ENCODE measurements at regions of chr19 and their contacts with region 1.

Region 1: GRCh38 chr19:44113138-44113783 is at the start of gene ZNF225:
- DNase-seq: peak; percentile 96 to 99 (median 98)
- H3K4me3 ChIP-seq: peak within 1 kb of the TSS; percentile 59 to 98 (median 82)
- H3K27ac ChIP-seq: peak within 1 kb of the TSS in 50 of 59 donors; percentile 9 to 90 (median 70)
- H3K27me3 ChIP-seq: no peaks in the 10 kb centered on the region
- CTCF ChIP-seq: peak in 40 of 56 donors; percentile 3 to 56 (median 36)
- total RNA-seq, gene ZNF225: 4.5 to 14.2 (median 8.2) TPM

Region 2: GRCh38 chr19:44051654-44052402 is 61.4 kb before region 1 on chr19 and contains the start of gene ZNF223:
- intact Hi-C with region 1: loop called (anchors 1 kb)
- DNase-seq: peak; percentile 90 to 98 (median 96)
- H3K4me3 ChIP-seq: peak within 1 kb of the TSS; percentile 59 to 95 (median 83)
- H3K27ac ChIP-seq: peak within 1 kb of the TSS in 51 of 59 donors; percentile 7 to 88 (median 71)
- H3K27me3 ChIP-seq: peaks cover 0 to 17% (median 0%) of the 10 kb centered on the region in 45 donors
- CTCF ChIP-seq: peak in 21 of 56 donors; percentile 7 to 45 (median 28)
- total RNA-seq, gene ZNF223: 5.2 to 18.6 (median 10.3) TPM

Region 3: DNA sequence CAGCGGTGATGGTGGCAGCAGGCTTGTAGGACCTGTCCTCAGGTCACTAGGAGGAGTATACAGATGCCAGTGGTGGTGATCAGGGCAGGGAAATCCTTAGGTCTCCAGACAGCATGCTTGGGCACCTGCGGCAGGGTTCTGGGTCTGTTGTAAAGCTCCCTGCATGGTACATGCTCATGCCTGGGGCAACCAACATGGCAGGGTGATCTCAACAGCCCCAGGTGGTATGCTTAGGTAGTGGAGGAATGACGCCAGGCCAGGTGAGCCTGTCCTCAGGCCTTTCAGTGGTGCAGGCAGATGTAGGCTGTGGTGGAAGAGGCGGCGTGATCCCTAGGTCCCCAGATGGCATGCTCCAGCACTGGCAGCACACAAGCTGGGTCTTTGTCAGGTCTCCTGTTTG is 29.4 kb before region 1 on chr19:
- intact Hi-C with region 1: no loop called
- DNase-seq: no peak
- H3K4me3 ChIP-seq: no peak overlapping the region
- H3K27ac ChIP-seq: no peak overlapping the region
- H3K27me3 ChIP-seq: no peaks in the 10 kb centered on the region
- CTCF ChIP-seq: no peak

Region 4: DNA sequence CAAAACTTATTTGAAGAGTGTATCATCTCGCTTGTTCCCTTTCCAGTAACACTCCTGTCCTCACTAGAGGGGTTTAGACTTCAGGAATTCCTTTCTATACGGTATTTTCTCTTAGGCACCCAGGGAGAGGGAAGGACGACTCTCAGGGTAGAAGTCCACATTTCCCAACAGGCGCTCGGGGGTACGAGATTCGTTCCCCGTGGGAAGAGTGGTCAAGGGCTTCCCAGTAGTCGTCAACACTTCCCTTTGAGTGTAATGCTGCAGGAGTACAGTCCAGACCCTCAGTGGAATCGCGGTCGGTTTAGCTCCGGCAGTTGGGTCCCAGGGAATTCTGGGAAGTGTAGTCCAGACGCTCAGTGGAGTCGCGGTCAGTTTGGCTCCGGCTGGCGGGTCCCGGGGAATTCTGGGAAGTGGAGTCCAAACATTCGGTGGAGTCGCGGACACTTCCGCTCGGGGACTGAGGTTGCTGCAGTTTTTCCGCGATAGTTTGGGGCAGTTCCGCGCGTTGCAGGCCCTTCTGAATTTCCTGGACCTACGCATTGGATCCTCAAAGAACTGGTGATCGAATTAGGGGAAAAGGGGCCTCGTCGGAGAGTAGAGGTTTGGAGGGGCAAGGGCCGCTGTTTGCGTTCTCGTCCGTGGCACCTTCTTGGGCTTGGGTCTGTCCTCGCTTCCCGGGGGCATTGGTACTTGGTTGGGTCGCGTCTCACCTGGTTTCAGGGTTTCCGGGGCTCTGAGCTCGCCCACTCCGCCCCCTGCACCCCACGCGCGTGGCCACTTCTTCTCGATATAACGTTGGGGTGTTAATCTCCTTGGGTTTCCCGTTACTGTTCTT is 19.1 kb before region 1 on chr19 and contains the start of gene ZNF224:
- intact Hi-C with region 1: loop called (anchors 1 to 2 kb)
- DNase-seq: peak; percentile 89 to 95 (median 94)
- H3K4me3 ChIP-seq: peak within 1 kb of the TSS; percentile 53 to 96 (median 85)
- H3K27ac ChIP-seq: peak within 1 kb of the TSS in 50 of 59 donors; percentile 1 to 87 (median 68)
- H3K27me3 ChIP-seq: no peaks in the 10 kb centered on the region
- CTCF ChIP-seq: peak in 23 of 56 donors; percentile 8 to 46 (median 25)
- total RNA-seq, gene ZNF224: 25.6 to 58.3 (median 42.2) TPM

Region 5: DNA sequence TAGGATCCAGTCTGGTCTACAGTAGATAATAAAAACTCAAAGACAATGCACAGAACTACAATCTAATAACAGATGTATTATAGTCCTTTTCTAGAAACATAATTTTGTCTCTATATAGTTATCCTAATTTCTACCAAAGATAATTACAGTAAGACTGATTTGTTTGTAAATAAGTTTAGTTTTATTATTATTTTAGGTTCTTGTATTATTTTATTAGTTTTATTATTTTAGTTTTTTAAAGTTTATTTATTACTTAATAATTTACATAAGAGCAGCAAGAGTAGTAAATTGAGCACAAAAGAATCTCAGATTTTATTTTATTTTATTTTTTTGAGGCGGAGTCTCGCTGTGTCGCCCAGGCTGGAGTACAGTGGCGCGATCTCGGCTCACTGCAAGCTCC is 76.8 kb after region 1 on chr19:
- intact Hi-C with region 1: no loop called
- DNase-seq: no peak
- H3K4me3 ChIP-seq: no peak overlapping the region
- H3K27ac ChIP-seq: no peak overlapping the region
- H3K27me3 ChIP-seq: no peaks in the 10 kb centered on the region
- CTCF ChIP-seq: no peak

Region 6: GRCh38 chr19:44207126-44207803 is 94.0 kb after region 1 on chr19:
- intact Hi-C with region 1: loop called in 1 of 2 experiments (anchors 10 kb)
- DNase-seq: peak; percentile 76 to 91 (median 88)
- H3K4me3 ChIP-seq: peak overlapping the region; percentile 62 to 99 (median 88)
- H3K27ac ChIP-seq: peak overlapping the region; percentile 1 to 98 (median 89)
- H3K27me3 ChIP-seq: peaks cover 0 to 5% (median 0%) of the 10 kb centered on the region in 45 donors
- CTCF ChIP-seq: peak in 21 of 56 donors; percentile 8 to 47 (median 21)